Transverse colon (tissue), 4 donors: ENCODE measurements at regions of chr20 and their contacts with region 1.

Region 1: GRCh38 chr20:15265581-15266309 is 928.3 kb upstream of the FLRT3 start:
- DNase-seq: no peak
- H3K4me3 ChIP-seq: no peak overlapping the region
- H3K27ac ChIP-seq: no peak overlapping the region
- H3K4me1 ChIP-seq: no peaks in the 10 kb centered on the region
- H3K27me3 ChIP-seq: no peaks in the 10 kb centered on the region
- CTCF ChIP-seq: no peak
- EP300 ChIP-seq: no peak
- POLR2A ChIP-seq: no peak

Region 2: GRCh38 chr20:14829906-14830305 is 435.8 kb before region 1 on chr20:
- in situ Hi-C with region 1: no loop called
- intact Hi-C with region 1: no loop called
- DNase-seq: no peak
- H3K4me3 ChIP-seq: no peak overlapping the region
- H3K27ac ChIP-seq: no peak overlapping the region
- H3K4me1 ChIP-seq: no peaks in the 10 kb centered on the region
- H3K27me3 ChIP-seq: no peaks in the 10 kb centered on the region
- CTCF ChIP-seq: no peak
- EP300 ChIP-seq: no peak
- POLR2A ChIP-seq: no peak

Region 3: GRCh38 chr20:16368645-16369292 is 1103.0 kb after region 1 on chr20:
- in situ Hi-C with region 1: no loop called
- intact Hi-C with region 1: loop called (anchors 5 kb)
- DNase-seq: no peak
- H3K4me3 ChIP-seq: no peak overlapping the region
- H3K27ac ChIP-seq: no peak overlapping the region
- H3K4me1 ChIP-seq: no peaks in the 10 kb centered on the region
- H3K27me3 ChIP-seq: no peaks in the 10 kb centered on the region
- CTCF ChIP-seq: no peak
- EP300 ChIP-seq: no peak
- POLR2A ChIP-seq: no peak

Region 4: DNA sequence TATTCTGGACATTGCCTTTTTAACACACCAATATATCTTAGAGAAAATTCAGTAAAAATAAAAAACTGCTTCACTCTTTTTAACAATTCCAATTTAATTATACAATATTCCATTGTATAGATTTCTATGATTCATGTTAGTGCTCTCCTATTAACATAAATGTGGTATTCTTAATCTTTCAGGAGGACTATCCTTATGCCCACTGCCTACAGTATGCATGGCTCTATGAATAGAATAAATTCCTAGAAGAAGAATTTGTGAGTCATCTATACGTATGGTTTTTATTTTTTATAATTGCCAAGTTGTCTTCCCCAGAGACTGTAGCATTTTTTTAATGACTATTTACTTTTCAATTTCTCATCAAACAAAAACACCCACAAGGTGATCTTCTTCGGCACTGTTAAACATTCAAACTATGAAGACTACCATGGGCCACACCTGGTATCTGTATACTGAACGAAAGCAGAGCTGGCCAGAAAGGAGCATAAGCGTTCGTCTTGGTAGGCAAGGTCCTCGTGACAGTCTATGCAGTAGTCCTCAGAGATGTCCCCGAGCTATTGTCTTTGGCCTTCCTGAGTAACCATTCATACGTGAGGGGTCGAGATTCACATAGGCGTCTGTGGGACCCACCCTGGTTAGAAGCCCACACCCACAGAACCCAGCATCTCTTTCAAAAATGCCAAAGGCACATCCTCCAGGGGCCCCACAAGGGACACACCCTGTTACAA is 1232.9 kb after region 1 on chr20:
- in situ Hi-C with region 1: no loop called
- intact Hi-C with region 1: loop called (anchors 5 kb)
- DNase-seq: no peak
- H3K4me3 ChIP-seq: no peak overlapping the region
- H3K27ac ChIP-seq: no peak overlapping the region
- H3K4me1 ChIP-seq: no peaks in the 10 kb centered on the region
- H3K27me3 ChIP-seq: no peaks in the 10 kb centered on the region
- CTCF ChIP-seq: no peak
- EP300 ChIP-seq: no peak
- POLR2A ChIP-seq: no peak